Dorsolateral prefrontal cortex (tissue), 120 donors: ENCODE measurements at regions of chr2 and their contacts with region 1.

Region 1: GRCh38 chr2:229454934-229455631 is 184.0 kb upstream of the PID1 start:
- DNase-seq: no peak
- H3K4me3 ChIP-seq: no peak overlapping the region
- H3K27ac ChIP-seq: no peak overlapping the region
- H3K27me3 ChIP-seq: no peaks in the 10 kb centered on the region
- CTCF ChIP-seq: no peak

Region 2: GRCh38 chr2:229489016-229489415 is 33.9 kb after region 1 on chr2:
- intact Hi-C with region 1: loop called in 1 of 2 experiments (anchors 5 kb)
- DNase-seq: peak in 9 of 10 donors; percentile 57 to 83 (median 72)
- H3K4me3 ChIP-seq: no peak overlapping the region
- H3K27ac ChIP-seq: peak overlapping the region in 22 of 59 donors; percentile 7 to 73 (median 31)
- H3K27me3 ChIP-seq: no peaks in the 10 kb centered on the region
- CTCF ChIP-seq: peak in 1 of 56 donors; percentile 20

Region 3: GRCh38 chr2:229511524-229511923 is 56.4 kb after region 1 on chr2:
- intact Hi-C with region 1: no loop called
- DNase-seq: no peak
- H3K4me3 ChIP-seq: no peak overlapping the region
- H3K27ac ChIP-seq: no peak overlapping the region
- H3K27me3 ChIP-seq: no peaks in the 10 kb centered on the region
- CTCF ChIP-seq: no peak

Region 4: DNA sequence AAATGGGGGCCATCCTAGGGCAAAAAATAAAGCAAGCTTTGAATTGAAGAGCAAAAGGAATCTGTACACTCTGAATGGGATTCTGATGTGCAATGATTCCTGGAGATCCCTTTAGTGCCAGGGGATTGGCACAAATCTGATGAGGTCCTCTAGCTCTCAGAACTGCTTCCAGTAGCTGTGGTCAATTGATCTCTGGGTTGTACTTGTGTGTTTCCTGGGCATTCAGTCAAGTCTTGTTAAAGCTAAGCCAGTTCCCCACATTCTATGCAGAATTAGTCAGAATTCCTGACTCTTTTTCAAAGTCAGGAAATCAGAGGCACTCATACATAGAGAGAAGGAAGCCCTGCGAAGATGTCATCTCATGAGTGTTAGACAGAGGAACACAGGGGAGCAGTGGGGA is 98.0 kb after region 1 on chr2:
- intact Hi-C with region 1: no loop called
- DNase-seq: no peak
- H3K4me3 ChIP-seq: no peak overlapping the region
- H3K27ac ChIP-seq: no peak overlapping the region
- H3K27me3 ChIP-seq: no peaks in the 10 kb centered on the region
- CTCF ChIP-seq: no peak

Region 5: DNA sequence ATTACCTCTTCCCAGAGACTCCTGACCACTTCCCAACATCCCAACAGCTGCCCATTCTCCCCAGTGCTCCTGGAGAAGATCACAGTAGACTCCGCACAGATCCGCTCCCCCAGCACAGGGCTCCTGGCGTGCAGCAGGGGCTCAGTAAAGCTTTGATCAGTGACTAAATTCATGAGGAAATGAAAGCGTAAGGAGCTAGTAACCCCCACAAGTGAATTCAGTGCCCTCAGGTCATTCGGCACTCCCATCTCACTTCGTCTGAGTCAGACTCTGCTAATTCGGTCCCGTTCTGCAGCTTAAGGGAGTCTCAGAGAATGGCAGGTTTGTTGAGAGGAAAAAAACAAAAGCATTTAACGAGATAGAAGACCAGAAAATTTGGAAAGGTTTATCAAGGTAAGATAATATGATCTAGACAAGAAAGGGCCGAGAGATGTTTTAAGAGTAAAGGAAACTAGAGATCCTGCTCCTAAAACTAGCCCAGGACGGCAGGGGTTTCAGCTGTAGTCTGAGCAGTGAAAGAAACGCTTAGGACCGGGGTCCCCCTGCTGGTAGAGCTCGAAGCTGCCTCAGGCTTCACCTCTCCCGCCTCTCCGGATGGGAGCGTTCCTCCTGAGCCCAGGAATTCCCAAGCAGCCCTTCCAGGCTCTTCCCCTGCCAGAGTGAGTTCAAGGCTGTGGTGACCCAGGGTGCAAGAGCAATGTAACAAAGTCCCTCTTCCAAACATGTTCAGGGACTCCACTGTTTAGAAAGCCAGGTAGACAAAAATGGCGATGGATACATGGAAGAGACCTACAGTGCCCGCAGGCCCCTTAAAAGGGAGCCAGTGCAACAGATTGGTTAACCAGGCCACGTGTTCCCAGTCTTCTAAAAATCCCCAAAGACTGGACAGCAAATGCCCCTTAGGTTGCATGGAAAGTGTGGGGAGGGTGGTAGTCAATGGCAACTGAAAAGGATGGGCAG is 131.9 kb after region 1 on chr2:
- intact Hi-C with region 1: no loop called
- DNase-seq: peak; percentile 54 to 91 (median 88)
- H3K4me3 ChIP-seq: peak overlapping the region in 50 of 59 donors; percentile 4 to 59 (median 32)
- H3K27ac ChIP-seq: peak overlapping the region in 6 of 59 donors; percentile 7 to 61 (median 22)
- H3K27me3 ChIP-seq: no peaks in the 10 kb centered on the region
- CTCF ChIP-seq: peak; percentile 82 to 99 (median 94)